H1 (cell line): ENCODE measurements at regions of chr1 and their contacts with region 1.

Region 1: GRCh38 chr1:202112839-202113672 is 9.7 kb upstream of the GPR37L1 start:
- DNase-seq: no peak
- H3K4me3 ChIP-seq: no peak overlapping the region
- H3K27ac ChIP-seq: no peak overlapping the region
- H3K4me1 ChIP-seq: peaks cover 2 to 9% (median 4%) of the 10 kb centered on the region in 4 experiments
- H3K27me3 ChIP-seq: no peaks in the 10 kb centered on the region
- CTCF ChIP-seq: no peak
- EP300 ChIP-seq: no peak
- POLR2A ChIP-seq: no peak
- RAD21 ChIP-seq: no peak

Region 2: GRCh38 chr1:201818971-201819750 is 293.9 kb before region 1 on chr1:
- CTCF ChIA-PET with region 1: no interaction called
- POLR2A ChIA-PET with region 1: no interaction called
- DNase-seq: no peak
- H3K4me3 ChIP-seq: no peak overlapping the region
- H3K27ac ChIP-seq: no peak overlapping the region
- H3K4me1 ChIP-seq: no peaks in the 10 kb centered on the region
- H3K27me3 ChIP-seq: no peaks in the 10 kb centered on the region
- CTCF ChIP-seq: no peak
- EP300 ChIP-seq: no peak
- POLR2A ChIP-seq: no peak
- RAD21 ChIP-seq: no peak

Region 3: GRCh38 chr1:201982623-201983379 is 130.3 kb before region 1 on chr1 and contains the start of gene RNPEP:
- CTCF ChIA-PET with region 1: interaction called, 29 read pairs
- POLR2A ChIA-PET with region 1: no interaction called
- DNase-seq: peak in 1 of 2 experiments; percentile 85
- H3K4me3 ChIP-seq: peak within 1 kb of the TSS; percentile 78 to 87 (median 82)
- H3K27ac ChIP-seq: peak within 1 kb of the TSS; percentile 13; the same call in 1 of the 2 replicates
- H3K4me1 ChIP-seq: peaks cover 0 to 4% (median 2%) of the 10 kb centered on the region in 4 experiments; a peak in 5 of 7 replicates
- H3K27me3 ChIP-seq: peaks cover 0 to 3% (median 0%) of the 10 kb centered on the region in 4 experiments; a peak in 1 of 7 replicates
- CTCF ChIP-seq: peak in 1 of 3 experiments; percentile 12; a peak in 1 of 4 replicates
- EP300 ChIP-seq: 0 out of 3 replicates have a peak, but pooled peaks of 1 of the 2 experiments have one; percentile 6
- POLR2A ChIP-seq: peak; percentile 6 to 68
- RAD21 ChIP-seq: no peak
- total RNA-seq, gene RNPEP: 45.2 and 51.1 TPM in 2 replicates

Region 4: DNA sequence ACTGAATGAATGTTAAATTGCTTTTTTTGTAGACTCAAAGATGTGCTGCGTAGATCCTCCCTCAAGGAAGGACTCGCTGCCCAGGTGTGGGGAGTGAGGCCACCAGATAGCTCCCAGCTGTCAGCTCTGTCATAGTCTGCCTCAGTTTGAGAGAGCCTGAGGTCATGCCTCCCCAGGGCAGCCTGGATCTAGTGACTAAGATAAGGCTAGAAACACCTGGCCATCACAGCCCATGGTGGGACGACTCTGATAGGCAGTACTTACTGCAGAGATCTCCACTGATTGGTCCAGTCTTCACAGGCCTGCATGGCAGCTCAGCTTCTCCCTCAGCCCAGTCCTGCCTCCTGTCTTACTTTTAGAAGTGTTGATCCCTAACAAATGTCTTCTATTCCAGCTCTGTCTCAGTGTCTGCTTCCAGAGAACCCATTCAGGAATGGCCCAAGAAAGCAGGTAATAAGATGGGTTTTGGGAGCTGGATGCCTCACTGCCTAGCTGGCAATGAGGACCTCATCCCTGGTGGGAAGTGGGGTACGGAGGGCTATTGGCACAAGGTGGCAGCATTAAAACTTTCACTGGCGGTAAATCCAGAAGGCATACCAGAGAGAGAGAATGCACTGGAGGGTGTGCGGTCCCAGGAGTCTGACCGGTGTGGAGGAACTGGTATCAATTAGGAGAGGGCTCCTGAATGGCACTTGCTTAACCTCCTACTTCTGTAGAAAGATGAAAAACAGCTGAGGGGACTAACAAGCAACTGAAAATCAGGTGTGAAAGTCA is 45.7 kb before region 1 on chr1:
- CTCF ChIA-PET with region 1: interaction called, 22 read pairs
- POLR2A ChIA-PET with region 1: no interaction called
- DNase-seq: no peak
- H3K4me3 ChIP-seq: no peak overlapping the region
- H3K27ac ChIP-seq: no peak overlapping the region
- H3K4me1 ChIP-seq: peaks cover 0 to 4% (median 0%) of the 10 kb centered on the region in 4 experiments; a peak in 3 of 7 replicates
- H3K27me3 ChIP-seq: no peaks in the 10 kb centered on the region
- CTCF ChIP-seq: no peak
- EP300 ChIP-seq: no peak
- POLR2A ChIP-seq: no peak
- RAD21 ChIP-seq: no peak

Region 5: GRCh38 chr1:202085682-202086404 is 27.2 kb before region 1 on chr1:
- CTCF ChIA-PET with region 1: interaction called, 10 read pairs
- POLR2A ChIA-PET with region 1: interaction called, 4 read pairs
- DNase-seq: peak in 1 of 2 experiments; percentile 56
- H3K4me3 ChIP-seq: peak overlapping the region in 1 of 4 experiments; percentile 35; a peak in 1 of 8 replicates
- H3K27ac ChIP-seq: peak overlapping the region; percentile 68; the same call in 1 of the 2 replicates
- H3K4me1 ChIP-seq: peaks cover 17 to 29% (median 20%) of the 10 kb centered on the region in 4 experiments
- H3K27me3 ChIP-seq: no peaks in the 10 kb centered on the region
- CTCF ChIP-seq: no peak
- EP300 ChIP-seq: no peak
- POLR2A ChIP-seq: no peak
- RAD21 ChIP-seq: no peak

Region 6: DNA sequence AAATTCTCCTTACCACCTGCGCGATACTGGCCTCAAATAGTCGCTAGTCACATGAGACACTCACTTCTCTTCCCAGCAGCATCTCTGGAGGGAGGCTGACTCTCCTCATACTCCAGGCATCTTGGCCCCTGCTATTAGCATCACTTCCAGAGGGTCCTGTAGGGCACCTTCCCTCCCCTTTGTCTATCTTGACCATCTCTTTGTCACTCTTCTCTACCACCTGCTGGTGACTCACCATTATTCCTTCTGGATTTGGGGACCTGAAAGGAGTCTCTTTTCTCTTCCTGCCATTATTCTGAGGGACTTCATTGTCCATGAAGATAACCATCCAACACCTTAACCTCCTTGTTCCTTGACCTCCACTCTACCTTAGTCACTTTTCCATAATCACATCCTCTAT is 22.1 kb before region 1 on chr1:
- CTCF ChIA-PET with region 1: interaction called, 12 read pairs
- POLR2A ChIA-PET with region 1: interaction called, 4 read pairs
- DNase-seq: no peak
- H3K4me3 ChIP-seq: no peak overlapping the region
- H3K27ac ChIP-seq: no peak overlapping the region
- H3K4me1 ChIP-seq: peaks cover 5 to 10% (median 6%) of the 10 kb centered on the region in 4 experiments; a peak in 5 of 7 replicates
- H3K27me3 ChIP-seq: no peaks in the 10 kb centered on the region
- CTCF ChIP-seq: 0 out of 4 replicates have a peak, but pooled peaks of 1 of the 3 experiments have one; percentile 14
- EP300 ChIP-seq: no peak
- POLR2A ChIP-seq: no peak
- RAD21 ChIP-seq: peak; percentile 10 to 30; a peak in 2 of 4 replicates

Region 7: DNA sequence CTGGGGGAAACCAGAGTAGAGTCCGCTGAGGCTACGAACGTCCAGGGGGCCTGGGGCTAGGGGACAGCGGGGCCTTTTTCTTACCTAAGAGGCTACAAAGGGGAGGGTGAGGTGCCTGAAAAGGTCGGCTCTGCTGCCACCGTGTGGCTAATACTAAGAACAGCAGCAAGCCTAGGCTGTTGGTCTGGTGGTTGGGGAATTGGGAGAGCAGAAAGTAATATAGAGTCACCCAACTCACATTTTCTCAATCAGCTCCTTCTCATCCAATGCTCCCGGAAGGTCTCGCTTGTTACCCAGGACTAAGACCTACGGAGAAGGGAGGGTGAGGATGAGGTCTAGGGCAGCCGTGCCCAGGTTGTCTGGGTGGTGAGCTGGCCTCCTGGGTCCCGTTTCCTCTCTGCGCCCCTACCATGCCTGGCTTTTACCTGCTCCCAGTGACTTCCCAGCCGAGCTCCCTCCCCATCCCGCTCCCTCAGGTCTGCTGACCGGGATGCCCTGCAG is 22.2 kb after region 1 on chr1:
- CTCF ChIA-PET with region 1: interaction called, 231 read pairs
- POLR2A ChIA-PET with region 1: interaction called, 3 read pairs
- DNase-seq: peak in 1 of 2 experiments; percentile 69
- H3K4me3 ChIP-seq: no peak overlapping the region
- H3K27ac ChIP-seq: 0 out of 2 replicates have a peak overlapping the region, but pooled peaks have one; percentile 17
- H3K4me1 ChIP-seq: peaks cover 0 to 11% (median 4%) of the 10 kb centered on the region in 4 experiments; a peak in 3 of 7 replicates
- H3K27me3 ChIP-seq: no peaks in the 10 kb centered on the region; a peak in 1 of 7 replicates
- CTCF ChIP-seq: peak in 2 of 3 experiments; percentile 84 to 87; a peak in 3 of 4 replicates
- EP300 ChIP-seq: no peak
- POLR2A ChIP-seq: no peak
- RAD21 ChIP-seq: peak; percentile 77 to 81

Region 8: GRCh38 chr1:202187041-202187671 is 74.1 kb after region 1 on chr1:
- CTCF ChIA-PET with region 1: no interaction called
- POLR2A ChIA-PET with region 1: no interaction called
- DNase-seq: no peak
- H3K4me3 ChIP-seq: no peak overlapping the region
- H3K27ac ChIP-seq: no peak overlapping the region
- H3K4me1 ChIP-seq: peaks cover 0 to 6% (median 4%) of the 10 kb centered on the region in 4 experiments; a peak in 5 of 7 replicates
- H3K27me3 ChIP-seq: no peaks in the 10 kb centered on the region; a peak in 3 of 7 replicates
- CTCF ChIP-seq: no peak
- EP300 ChIP-seq: no peak
- POLR2A ChIP-seq: no peak
- RAD21 ChIP-seq: no peak

Region 9: DNA sequence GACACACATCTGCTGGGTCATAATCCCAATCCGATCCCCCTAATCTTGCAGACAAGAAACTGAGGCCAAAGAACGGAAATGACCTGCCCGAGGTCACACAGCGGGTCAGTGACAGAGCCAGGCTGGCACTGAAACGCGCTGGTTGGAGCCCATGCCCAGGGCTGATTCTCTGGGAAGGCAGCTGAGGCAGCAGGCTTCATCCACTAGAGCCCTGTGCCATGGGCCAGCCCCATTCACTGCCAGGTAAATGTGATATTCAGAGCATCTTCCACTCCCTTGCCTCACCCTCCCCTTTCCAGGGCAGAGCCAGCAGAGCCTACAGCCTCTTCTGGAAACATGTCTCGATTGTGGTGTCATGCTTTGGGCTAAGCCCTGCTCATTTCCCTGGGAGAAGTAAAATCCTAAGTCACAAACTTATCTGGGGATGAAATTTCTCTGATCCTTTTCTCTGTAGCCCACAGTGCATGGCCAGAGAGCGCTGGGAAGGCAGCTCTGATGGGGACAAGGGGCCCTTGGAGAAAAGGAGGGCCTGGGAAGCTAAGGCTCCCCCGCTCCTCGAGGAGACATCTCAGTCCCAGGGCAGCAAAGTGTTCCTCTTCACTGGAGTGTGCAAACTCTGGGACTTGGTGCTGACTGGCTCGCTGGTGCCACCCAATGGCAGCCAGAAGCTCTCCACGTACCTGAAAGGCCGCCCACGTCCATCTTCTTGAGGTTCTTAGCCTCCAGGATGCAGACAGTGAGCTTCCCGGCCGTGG is 486.8 kb after region 1 on chr1:
- CTCF ChIA-PET with region 1: no interaction called
- POLR2A ChIA-PET with region 1: no interaction called
- DNase-seq: peak; percentile 51 to 72
- H3K4me3 ChIP-seq: no peak overlapping the region
- H3K27ac ChIP-seq: no peak overlapping the region
- H3K4me1 ChIP-seq: no peaks in the 10 kb centered on the region
- H3K27me3 ChIP-seq: no peaks in the 10 kb centered on the region
- CTCF ChIP-seq: peak; percentile 80 to 96 (median 87)
- EP300 ChIP-seq: no peak
- POLR2A ChIP-seq: no peak
- RAD21 ChIP-seq: peak; percentile 89 to 92